GM10248 (cell line): ENCODE measurements at regions of chr2 and their contacts with region 1.

Region 1: GRCh38 chr2:11446733-11447248 is 19.2 kb downstream of the E2F6 start:
- DNase-seq: peak; percentile 43
- CTCF ChIP-seq: peak; percentile 55

Region 2: GRCh38 chr2:11203480-11203879 is 243.3 kb before region 1 on chr2:
- CTCF ChIA-PET with region 1: no interaction called
- POLR2A ChIA-PET with region 1: no interaction called
- DNase-seq: peak; percentile 22
- CTCF ChIP-seq: no peak

Region 3: DNA sequence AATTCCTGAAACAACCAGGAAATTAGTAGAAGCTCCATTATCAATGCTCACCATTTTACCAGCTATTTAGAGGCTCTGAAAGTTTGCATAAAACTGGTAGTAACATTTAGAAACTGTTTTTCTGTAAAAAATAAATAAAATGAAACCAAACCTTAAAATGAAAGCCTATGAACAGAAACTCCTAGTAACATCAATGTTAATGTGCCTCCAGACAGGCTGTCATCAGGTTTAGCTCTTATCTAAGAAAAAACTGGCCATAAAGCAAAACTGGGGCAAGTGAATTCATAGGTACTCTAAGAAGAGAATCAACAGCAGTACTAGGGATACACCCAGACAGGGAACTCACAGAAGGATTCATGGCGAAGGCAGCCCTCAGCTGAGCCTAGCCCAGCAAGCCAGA is 11.1 kb after region 1 on chr2:
- CTCF ChIA-PET with region 1: interaction called, 21 read pairs
- POLR2A ChIA-PET with region 1: no interaction called
- DNase-seq: no peak
- CTCF ChIP-seq: no peak